BJ (cell line): ENCODE measurements at regions of chr4 and their contacts with region 1.

Region 1: GRCh38 chr4:176320976-176321361 is 1.2 kb downstream of the SPCS3 start:
- DNase-seq: no peak
- H3K4me3 ChIP-seq: peak overlapping the region; percentile 99
- H3K27me3 ChIP-seq: no peaks in the 10 kb centered on the region
- CTCF ChIP-seq: no peak

Region 2: DNA sequence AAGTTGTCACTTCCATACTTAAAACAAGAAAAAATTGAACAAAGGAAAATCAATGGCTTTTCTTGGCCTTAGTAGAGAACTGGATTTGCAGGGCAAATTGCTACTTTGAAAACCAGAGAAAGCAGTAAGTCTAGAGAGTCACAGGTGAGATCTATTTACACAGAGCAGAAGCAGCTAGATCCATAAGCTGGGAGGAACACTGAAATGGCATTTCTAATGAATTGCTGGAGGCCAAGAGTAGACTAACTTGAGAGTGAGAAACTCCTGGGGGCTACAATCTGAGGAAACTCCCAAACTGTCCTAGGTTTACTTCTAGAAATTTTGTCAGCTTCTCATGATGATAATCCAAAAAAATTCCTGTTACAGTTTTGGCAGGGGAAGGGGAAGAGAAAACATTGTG is 132.1 kb after region 1 on chr4:
- CTCF ChIA-PET with region 1: no interaction called
- POLR2A ChIA-PET with region 1: interaction called, 14 read pairs
- DNase-seq: no peak
- H3K4me3 ChIP-seq: no peak overlapping the region
- H3K27me3 ChIP-seq: no peaks in the 10 kb centered on the region
- CTCF ChIP-seq: no peak

Region 3: GRCh38 chr4:176879380-176880119 is 558.6 kb after region 1 on chr4:
- CTCF ChIA-PET with region 1: no interaction called
- POLR2A ChIA-PET with region 1: no interaction called
- DNase-seq: no peak
- H3K4me3 ChIP-seq: no peak overlapping the region
- H3K27me3 ChIP-seq: no peaks in the 10 kb centered on the region
- CTCF ChIP-seq: no peak